A673 (cell line): ENCODE measurements at regions of chr4 and their contacts with region 1.

Region 1: GRCh38 chr4:113394730-113395530 is 345.5 kb downstream of the ANK2 start:
- DNase-seq: peak; percentile 92
- H3K4me3 ChIP-seq: no peak overlapping the region
- H3K27ac ChIP-seq: no peak overlapping the region
- H3K4me1 ChIP-seq: peaks cover 4% of the 10 kb centered on the region
- H3K27me3 ChIP-seq: no peaks in the 10 kb centered on the region
- CTCF ChIP-seq: peak; percentile 79

Region 2: DNA sequence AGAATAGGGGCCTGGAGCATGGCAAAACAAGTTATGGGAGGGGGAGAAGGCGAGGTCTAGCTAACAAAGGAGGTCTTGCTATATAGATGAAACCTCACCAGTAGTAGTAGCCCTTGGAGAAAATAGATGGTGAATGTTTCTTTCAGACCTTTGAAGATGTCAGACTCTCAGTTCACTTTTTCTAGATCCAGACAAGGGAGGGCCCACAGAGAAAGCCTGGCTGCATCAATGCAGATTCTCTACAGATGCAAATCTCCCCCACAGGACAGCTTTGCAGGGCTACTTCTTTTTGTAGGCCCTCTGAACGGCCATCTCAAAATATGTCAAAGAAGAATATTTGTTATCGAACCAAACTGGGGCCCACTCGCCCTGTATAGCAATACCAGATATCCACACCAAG is 185.8 kb before region 1 on chr4:
- CTCF ChIA-PET with region 1: no interaction called
- POLR2A ChIA-PET with region 1: no interaction called
- intact Hi-C with region 1: no loop called
- DNase-seq: no peak
- H3K4me3 ChIP-seq: no peak overlapping the region
- H3K27ac ChIP-seq: no peak overlapping the region
- H3K4me1 ChIP-seq: no peaks in the 10 kb centered on the region
- H3K27me3 ChIP-seq: no peaks in the 10 kb centered on the region
- CTCF ChIP-seq: no peak

Region 3: DNA sequence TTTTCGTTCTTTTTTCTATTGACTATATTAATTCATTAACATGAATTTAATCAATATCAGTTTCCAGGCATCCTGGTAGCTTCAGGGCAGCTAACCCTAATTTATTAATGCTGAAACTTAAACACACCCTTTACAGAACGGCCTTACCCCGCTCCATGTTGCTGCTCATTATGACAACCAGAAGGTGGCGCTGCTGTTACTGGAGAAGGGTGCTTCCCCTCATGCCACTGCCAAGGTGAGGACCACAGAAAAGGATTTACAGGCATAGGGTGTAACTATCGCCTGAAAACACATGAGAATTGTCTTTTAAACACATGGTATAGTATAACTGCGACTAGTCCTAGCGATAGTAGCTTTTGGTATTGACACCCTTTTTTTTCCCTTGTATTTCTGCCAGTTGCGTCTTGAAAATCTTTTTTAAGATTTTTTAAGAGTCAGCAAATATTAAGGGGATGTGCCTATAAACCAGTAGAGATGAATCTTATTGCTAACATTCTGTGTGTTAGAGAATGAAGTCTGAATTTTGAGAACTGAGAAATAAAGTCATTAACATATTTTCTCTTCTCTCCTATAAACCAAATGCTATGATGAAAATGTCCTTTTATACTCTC is 116.5 kb before region 1 on chr4:
- CTCF ChIA-PET with region 1: no interaction called
- POLR2A ChIA-PET with region 1: no interaction called
- intact Hi-C with region 1: loop called (anchors 5 kb)
- DNase-seq: peak; percentile 88
- H3K4me3 ChIP-seq: no peak overlapping the region
- H3K27ac ChIP-seq: no peak overlapping the region
- H3K4me1 ChIP-seq: no peaks in the 10 kb centered on the region
- H3K27me3 ChIP-seq: no peaks in the 10 kb centered on the region
- CTCF ChIP-seq: peak; percentile 95

Region 4: GRCh38 chr4:113761620-113762185 is 366.8 kb after region 1 on chr4 and contains the start of gene CAMK2D:
- CTCF ChIA-PET with region 1: no interaction called
- POLR2A ChIA-PET with region 1: no interaction called
- intact Hi-C with region 1: loop called (anchors 1 kb)
- DNase-seq: peak; percentile 95
- H3K4me3 ChIP-seq: peak within 1 kb of the TSS; percentile 84
- H3K27ac ChIP-seq: peak within 1 kb of the TSS; percentile 99
- H3K4me1 ChIP-seq: peaks cover 32% of the 10 kb centered on the region
- H3K27me3 ChIP-seq: no peaks in the 10 kb centered on the region
- CTCF ChIP-seq: peak; percentile 82
- total RNA-seq, gene CAMK2D: 34.7 and 35.8 TPM in 2 replicates

Region 5: DNA sequence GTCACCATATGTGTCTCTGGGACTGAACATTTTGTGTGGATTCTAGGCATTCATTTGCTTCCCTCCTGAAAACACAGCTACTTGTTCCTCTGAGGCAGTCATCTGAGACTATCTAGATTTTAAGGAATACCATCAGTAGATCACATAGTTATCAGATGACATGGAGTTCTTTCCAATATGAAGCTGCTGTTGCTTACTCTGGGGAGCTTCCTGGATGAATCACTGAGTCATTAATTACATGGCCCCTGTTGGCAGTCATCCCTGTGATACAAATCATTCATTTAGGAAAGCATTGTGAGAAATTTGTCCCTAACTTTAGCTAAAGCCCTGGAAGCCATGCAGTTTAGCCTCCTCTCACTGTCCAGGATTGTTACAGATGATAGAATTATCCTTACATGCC is 682.7 kb after region 1 on chr4:
- CTCF ChIA-PET with region 1: no interaction called
- POLR2A ChIA-PET with region 1: no interaction called
- intact Hi-C with region 1: loop called (anchors 5 kb)
- DNase-seq: peak; percentile 79
- H3K4me3 ChIP-seq: no peak overlapping the region
- H3K27ac ChIP-seq: no peak overlapping the region
- H3K4me1 ChIP-seq: peaks cover 5% of the 10 kb centered on the region
- H3K27me3 ChIP-seq: no peaks in the 10 kb centered on the region
- CTCF ChIP-seq: no peak

Region 6: GRCh38 chr4:114694770-114695169 is 1299.8 kb after region 1 on chr4:
- CTCF ChIA-PET with region 1: no interaction called
- POLR2A ChIA-PET with region 1: no interaction called
- intact Hi-C with region 1: loop called (anchors 5 kb)
- DNase-seq: peak; percentile 51
- H3K4me3 ChIP-seq: no peak overlapping the region
- H3K27ac ChIP-seq: no peak overlapping the region
- H3K4me1 ChIP-seq: peaks cover 6% of the 10 kb centered on the region
- H3K27me3 ChIP-seq: no peaks in the 10 kb centered on the region
- CTCF ChIP-seq: peak; percentile 66